Caki2 (cell line): ENCODE measurements at regions of chr2 and their contacts with region 1.

Region 1: DNA sequence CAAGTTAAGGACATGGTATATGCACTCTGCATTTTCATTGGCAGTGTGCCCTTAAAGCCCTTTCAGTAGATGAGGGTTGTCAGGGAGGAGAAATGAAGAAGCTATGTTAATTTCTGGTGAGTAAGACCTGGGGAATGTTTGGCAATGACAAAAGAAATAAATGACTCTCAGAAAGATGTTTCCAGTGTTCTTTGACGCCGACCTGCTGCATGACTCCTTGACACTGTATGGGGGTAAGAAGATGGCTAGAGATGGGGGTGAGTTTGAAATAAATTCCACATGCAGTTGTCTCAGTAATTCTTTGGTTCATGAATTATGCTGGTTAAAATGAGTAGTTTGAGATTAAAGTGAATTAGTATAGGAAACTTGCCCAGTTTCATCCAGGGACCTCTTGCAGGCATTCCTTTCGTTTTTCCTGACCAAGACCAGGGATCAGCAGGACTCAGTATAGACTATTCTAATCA is 5.9 kb downstream of the CCDC121 start:
- DNase-seq: peak; percentile 90

Region 2: GRCh38 chr2:27587025-27587424 is 35.9 kb before region 1 on chr2:
- in situ Hi-C with region 1: loop called (anchors 5 kb)
- DNase-seq: no peak

Region 3: DNA sequence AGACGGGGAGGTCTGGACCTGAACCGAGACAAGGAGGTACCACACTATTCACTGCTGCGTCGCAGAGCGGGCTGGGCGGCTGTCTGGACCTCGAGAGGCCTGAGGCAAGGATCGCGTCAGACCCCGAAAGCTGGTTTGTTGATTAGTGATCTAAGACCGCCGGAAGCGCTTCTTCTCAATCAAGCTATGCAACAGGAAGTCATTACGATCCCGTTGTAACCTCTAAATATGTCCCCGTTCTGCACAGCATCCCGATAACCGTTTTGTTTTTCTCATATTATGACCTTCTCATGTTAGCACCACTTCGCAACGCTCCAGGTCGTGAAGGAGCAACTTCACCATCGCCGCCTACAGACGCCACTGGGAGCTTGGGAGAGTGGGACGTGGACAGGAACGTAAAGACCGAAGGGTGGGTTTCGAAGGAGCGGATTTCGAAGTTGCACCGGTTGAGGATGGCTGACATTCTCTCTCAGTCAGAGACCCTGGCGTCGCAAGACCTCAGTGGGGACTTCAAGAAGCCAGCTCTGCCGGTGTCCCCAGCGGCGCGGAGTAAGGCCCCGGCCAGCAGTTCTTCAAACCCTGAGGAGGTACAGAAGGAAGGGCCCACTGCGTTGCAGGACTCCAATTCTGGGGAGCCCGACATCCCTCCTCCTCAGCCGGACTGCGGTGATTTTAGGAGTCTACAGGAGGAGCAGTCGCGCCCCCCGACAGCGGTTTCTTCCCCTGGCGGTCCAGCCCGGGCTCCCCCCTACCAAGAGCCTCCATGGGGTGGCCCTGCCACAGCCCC is 40.7 kb after region 1 on chr2 and contains the starts of genes SLC4A1AP and SUPT7L:
- in situ Hi-C with region 1: no loop called
- DNase-seq: peak; percentile 88
- total RNA-seq, gene SLC4A1AP: 27.6 and 37.5 TPM in 2 replicates
- total RNA-seq, gene SUPT7L: 17.3 and 24.8 TPM in 2 replicates

Region 4: DNA sequence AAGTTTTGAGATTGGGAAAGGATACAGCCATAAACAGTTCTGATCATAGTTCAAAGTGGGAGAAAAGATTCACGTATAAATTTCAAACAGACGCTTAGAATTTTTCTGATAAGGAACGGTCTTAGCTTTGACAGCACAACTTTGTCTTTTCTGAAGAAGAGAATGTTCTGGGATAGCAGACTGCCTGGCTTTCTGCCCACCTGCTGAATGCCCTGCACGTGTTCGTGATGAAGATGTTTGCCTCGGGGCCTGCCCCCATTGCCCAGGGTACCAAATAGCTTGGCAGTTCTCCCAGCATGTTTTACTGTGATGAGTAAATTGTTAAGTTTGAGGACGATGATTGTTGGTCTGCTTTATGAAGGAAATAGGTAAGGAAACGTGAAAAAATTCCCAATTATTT is 153.1 kb after region 1 on chr2:
- in situ Hi-C with region 1: no loop called
- DNase-seq: no peak